OCI-LY7 (cell line): ENCODE measurements at regions of chr13 and their contacts with region 1.

Region 1: DNA sequence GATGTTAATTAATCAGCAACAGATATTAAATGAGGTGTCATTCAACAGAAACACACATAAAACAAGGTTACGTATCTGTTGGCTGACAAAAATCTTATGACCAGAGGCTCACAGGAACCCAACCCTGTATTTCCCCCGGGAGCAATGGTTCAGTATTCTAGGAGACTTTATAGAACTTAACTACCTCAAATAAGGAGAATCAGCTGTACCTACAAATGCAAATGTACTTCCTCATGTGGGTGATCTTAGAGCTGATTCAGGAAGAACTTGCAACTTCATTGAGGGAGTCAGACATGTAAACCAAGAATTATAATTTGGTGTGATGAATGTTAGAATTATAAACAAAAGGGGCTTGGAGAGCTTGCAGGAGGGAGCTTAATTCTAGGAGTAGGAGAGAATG is 20.1 kb downstream of the FGF9 start:
- DNase-seq: no peak
- H3K4me3 ChIP-seq: no peak overlapping the region
- H3K27ac ChIP-seq: no peak overlapping the region
- H3K4me1 ChIP-seq: peaks cover 5% of the 10 kb centered on the region
- CTCF ChIP-seq: no peak

Region 2: GRCh38 chr13:21677075-21677623 is 13.8 kb before region 1 on chr13:
- CTCF ChIA-PET with region 1: no interaction called
- POLR2A ChIA-PET with region 1: interaction called, 11 read pairs
- intact Hi-C with region 1: no loop called
- DNase-seq: no peak
- H3K4me3 ChIP-seq: no peak overlapping the region
- H3K27ac ChIP-seq: no peak overlapping the region
- H3K4me1 ChIP-seq: peaks cover 28% of the 10 kb centered on the region
- CTCF ChIP-seq: no peak